Ascending aorta (tissue), 2 donors: ENCODE measurements at regions of chr14 and their contacts with region 1.

Region 1: DNA sequence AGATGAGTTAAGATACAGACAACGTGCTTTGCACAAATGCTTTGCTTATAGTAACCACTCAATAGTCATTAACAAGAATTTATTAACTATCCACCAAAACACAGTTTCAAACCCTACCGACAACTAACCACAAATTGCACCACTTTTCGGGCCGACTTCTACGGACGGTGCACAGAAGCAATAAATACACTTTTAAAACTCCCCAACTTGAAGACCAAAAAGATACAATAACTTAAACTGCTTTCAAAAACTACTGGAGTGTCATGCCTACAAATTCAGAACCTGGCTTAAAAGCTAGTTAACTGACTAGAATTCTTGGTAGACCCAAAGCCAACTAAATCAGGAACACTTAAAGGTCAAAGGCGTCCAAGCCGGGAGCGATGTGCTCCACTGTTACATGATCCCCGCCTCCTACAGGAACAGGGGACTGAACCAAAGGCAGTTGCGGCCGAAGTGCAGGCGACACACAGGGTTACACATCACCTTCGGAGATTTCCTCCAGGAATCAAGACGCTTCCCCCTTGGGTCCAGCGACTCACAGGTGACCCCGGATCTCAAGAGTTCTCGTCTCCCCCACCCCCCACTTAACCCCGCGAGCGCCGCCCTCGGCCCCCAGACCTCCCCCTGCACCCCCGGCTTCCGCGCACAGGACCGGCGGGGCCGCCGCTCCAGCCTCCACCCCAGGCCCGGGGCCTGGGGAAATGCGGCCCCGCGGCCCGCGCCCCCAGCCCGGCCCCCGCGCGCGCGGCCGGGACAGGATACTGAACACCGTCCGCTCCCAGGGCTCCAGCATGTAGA is 507 bp downstream of the SPTSSA start:
- DNase-seq: peak in 1 of 2 donors; percentile 77
- H3K4me3 ChIP-seq: peak overlapping the region; percentile 80 to 86
- H3K27ac ChIP-seq: peak overlapping the region; percentile 76 to 94
- H3K4me1 ChIP-seq: peaks cover 0 to 7% of the 10 kb centered on the region in 2 donors
- H3K27me3 ChIP-seq: no peaks in the 10 kb centered on the region
- CTCF ChIP-seq: no peak

Region 2: DNA sequence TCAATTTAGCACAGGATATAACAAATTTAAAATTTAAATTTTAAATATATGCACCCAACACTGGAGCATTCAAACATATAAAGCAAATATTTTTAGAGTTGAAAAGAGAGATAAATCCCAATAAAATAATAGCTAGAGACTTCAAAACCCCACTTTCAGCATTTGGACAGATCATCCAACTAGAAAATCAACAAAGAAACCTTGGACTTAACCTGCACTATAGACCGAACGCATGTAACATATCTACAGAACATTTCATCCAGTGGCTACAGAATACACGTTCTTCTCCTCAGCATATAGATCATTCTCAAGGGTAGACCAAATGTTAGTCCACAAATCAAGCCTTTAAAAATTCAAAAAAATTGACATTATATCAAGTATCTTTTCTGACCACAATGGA is 63.5 kb before region 1 on chr14:
- intact Hi-C with region 1: no loop called
- DNase-seq: no peak
- H3K4me3 ChIP-seq: no peak overlapping the region
- H3K27ac ChIP-seq: no peak overlapping the region
- H3K4me1 ChIP-seq: no peaks in the 10 kb centered on the region
- H3K27me3 ChIP-seq: no peaks in the 10 kb centered on the region
- CTCF ChIP-seq: no peak

Region 3: GRCh38 chr14:34496679-34497513 is 35.4 kb after region 1 on chr14:
- intact Hi-C with region 1: loop called (anchors 1 kb)
- DNase-seq: peak; percentile 27 to 90
- H3K4me3 ChIP-seq: no peak overlapping the region
- H3K27ac ChIP-seq: peak overlapping the region; percentile 19 to 78
- H3K4me1 ChIP-seq: peaks cover 0 to 12% of the 10 kb centered on the region in 2 donors
- H3K27me3 ChIP-seq: no peaks in the 10 kb centered on the region
- CTCF ChIP-seq: peak in 1 of 3 experiments; percentile 12

Region 4: DNA sequence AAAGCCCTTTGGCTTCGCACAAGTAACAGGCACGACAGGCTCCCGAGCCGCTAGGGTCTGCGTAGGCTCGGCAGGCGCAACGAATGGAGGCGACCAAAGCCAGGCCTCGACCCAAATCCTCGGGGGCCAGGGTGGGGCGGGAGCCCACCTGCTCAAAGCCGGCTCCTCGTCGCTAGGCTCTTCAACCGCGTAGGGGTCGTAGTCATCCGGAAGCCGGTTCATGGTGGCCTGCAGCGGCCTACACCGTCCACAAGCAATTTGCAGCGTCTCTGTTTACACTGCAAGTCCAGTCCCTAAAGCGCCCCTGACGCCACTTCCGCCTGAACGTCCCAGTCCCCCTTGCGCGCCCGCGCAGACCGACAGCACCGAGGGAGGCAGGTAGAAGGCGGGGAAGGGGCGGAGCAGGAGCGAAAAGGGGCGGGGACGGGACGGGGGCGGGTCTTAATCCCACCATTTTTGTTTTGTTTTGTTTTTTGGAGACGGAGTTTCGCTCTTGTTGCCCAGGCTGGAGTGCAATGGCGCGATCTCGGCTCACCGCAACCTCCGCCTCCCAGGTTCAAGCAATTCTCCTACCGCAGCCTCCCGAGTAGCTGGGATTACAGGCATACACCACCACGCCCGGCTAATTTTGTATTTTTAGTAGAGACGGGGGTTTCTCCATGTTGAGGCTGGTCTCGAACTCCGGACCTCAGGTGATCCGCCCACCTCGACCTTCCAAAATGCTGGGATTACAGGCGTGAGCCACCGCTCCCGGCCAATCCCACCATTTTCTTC is 78.1 kb after region 1 on chr14 and contains the start of gene EAPP:
- intact Hi-C with region 1: loop called (anchors 5 kb)
- DNase-seq: peak; percentile 96 to 99
- H3K4me3 ChIP-seq: peak within 1 kb of the TSS; percentile 75 to 86
- H3K27ac ChIP-seq: peak within 1 kb of the TSS; percentile 92
- H3K4me1 ChIP-seq: peaks cover 2 to 3% of the 10 kb centered on the region in 2 donors
- H3K27me3 ChIP-seq: no peaks in the 10 kb centered on the region
- CTCF ChIP-seq: no peak
- total RNA-seq, gene EAPP: 10.1 TPM

Region 5: DNA sequence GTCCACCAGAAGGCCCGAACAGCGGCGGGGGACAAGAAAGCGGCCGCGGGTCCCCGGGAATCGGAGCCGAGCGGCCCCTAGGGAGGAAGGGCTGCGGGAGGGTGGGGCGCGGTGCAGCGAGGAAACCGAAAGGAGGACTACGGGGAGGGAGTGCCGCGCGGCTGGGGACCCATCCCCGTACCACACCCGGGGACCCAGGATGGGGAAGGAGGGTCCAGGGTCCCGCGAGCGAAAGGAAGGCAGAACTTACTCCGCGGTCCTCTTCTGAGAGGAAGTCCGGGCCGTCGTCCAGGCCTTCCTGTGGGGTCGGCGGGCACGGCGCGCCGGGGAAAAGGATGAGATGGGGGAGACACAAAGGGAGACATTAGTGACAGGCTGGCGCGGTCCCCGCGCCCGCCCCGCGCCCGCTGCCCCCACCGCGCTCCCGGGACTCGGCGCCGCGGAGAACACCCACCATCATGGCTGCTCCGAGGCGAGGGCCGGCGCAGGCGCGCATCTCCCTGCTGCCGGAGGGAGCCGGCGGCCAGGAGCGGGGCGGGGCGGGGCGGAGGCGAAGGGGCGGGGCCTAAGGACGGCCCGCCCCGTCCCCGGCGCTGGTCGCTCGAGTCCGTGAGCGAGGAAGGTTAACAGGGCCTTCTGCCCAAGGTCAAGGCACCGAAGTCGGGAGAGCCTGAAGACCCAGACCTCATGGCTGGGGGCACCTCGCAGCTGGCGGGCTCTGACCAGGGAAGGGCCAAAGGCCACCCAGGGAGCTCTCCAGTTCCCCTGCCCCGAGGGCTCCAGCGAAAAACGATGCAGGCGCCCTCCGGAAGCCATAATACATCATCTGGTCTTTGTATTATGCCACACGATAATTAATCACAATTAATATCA is 168.4 kb after region 1 on chr14 and contains the start of gene SNX6:
- intact Hi-C with region 1: loop called (anchors 10 kb)
- DNase-seq: peak; percentile 46 to 92
- H3K4me3 ChIP-seq: peak within 1 kb of the TSS; percentile 85 to 96
- H3K27ac ChIP-seq: peak within 1 kb of the TSS; percentile 87 to 94
- H3K4me1 ChIP-seq: peaks cover 5 to 6% of the 10 kb centered on the region in 2 donors
- H3K27me3 ChIP-seq: no peaks in the 10 kb centered on the region
- CTCF ChIP-seq: no peak
- total RNA-seq, gene SNX6: 25.3 TPM